Right ventricle myocardium inferior (tissue), 1 donor: ENCODE measurements at regions of chr10 and their contacts with region 1.

Region 1: GRCh38 chr10:72539137-72539536 is 86.7 kb downstream of the MICU1 start:
- DNase-seq: no peak
- ATAC-seq: no peak

Region 2: DNA sequence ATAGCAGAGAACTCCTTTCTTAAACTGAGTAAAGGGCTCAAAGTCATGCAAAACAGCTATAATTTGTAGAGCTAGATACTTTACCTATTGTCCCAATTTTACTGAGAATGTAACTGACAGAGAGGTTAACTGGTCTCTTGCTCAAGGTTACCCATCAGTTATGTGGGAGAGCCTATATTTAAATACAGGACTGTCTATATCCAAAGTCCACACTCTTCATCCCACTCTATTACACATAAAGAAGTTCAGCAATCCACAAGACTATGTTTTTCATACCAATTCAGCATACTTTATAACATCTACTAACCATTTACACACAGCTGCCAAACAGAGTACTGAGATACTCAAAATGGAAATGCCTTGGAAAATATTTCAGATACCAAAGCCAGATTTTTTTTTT is 13.4 kb before region 1 on chr10:
- intact Hi-C with region 1: loop called (anchors 1 kb)
- DNase-seq: no peak
- ATAC-seq: no peak

Region 3: DNA sequence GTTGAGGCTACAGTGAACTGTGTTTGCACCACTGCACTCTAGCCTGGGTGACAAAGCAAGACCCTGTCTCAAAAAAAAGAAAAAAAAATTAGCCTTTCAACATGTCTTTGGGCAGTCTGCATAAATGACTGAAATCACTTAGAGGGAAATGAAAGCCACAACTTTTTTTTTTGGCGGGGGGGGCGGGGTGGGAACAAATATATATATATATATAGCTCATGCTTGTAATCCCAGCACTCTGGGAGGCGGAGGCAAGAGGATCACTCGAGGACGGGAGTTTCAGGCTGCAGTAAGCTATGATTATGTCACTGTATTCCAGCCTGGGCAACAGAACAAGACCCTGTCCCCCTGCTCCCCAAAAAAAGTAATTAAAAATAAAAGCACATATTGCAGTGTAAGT is 110.2 kb after region 1 on chr10:
- intact Hi-C with region 1: no loop called
- DNase-seq: no peak
- ATAC-seq: no peak

Region 4: GRCh38 chr10:73182568-73182967 is 643.4 kb after region 1 on chr10:
- intact Hi-C with region 1: no loop called
- DNase-seq: no peak
- ATAC-seq: no peak